Mammary epithelial cell (primary cell): ENCODE measurements at regions of chr16 and their contacts with region 1.

Region 1: GRCh38 chr16:47848421-47849109 is 307.2 kb downstream of the ABCC12 start:
- DNase-seq: peak; percentile 71
- H3K4me3 ChIP-seq: no peak overlapping the region
- H3K27ac ChIP-seq: peak overlapping the region; percentile 83
- H3K4me1 ChIP-seq: peaks cover 25% of the 10 kb centered on the region
- H3K27me3 ChIP-seq: no peaks in the 10 kb centered on the region
- CTCF ChIP-seq: no peak

Region 2: DNA sequence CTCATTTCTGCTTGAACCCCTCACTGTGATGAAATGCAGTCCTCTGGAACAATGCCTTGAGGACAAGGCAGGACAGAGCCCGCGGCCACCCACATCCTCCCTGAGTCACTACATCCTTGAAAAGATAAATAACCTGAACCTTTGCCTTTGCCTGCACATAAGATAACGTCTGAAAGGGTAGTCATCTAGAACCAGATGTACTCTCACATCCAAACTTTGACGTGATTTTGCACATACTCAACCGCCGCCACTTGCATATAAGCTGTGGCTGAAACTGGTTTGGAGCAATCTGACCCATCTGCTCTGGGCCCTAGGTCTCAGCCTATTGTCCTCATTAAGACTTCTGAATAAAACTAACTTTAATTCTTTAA is 135.4 kb before region 1 on chr16:
- CTCF ChIA-PET with region 1: no interaction called
- dilution Hi-C with region 1: no loop called
- in situ Hi-C with region 1: no loop called
- intact Hi-C with region 1: loop called (anchors 10 kb)
- DNase-seq: peak; percentile 93
- H3K4me3 ChIP-seq: no peak overlapping the region
- H3K27ac ChIP-seq: peak overlapping the region; percentile 78
- H3K4me1 ChIP-seq: peaks cover 28% of the 10 kb centered on the region
- H3K27me3 ChIP-seq: no peaks in the 10 kb centered on the region
- CTCF ChIP-seq: no peak

Region 3: DNA sequence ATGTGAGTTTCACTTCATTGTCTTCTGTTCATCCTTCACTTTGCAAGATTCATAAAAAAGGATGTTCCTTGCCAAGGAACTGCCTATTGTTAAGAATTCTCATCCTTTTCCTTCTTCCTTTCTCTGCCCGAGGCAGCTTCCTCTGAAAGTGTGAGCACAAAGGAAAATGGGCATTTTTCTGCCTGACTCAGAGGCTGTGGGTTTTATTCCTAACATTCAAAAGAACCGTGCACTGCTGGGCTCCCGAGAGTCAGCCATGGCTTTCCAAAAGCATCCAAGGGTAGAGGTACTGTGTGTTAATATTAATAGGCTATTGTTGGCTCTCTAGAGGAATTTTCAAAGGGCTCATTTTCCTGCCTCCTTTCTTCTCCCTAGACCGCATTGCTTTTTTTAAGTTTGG is 17.9 kb after region 1 on chr16:
- CTCF ChIA-PET with region 1: no interaction called
- dilution Hi-C with region 1: no loop called
- in situ Hi-C with region 1: no loop called
- intact Hi-C with region 1: loop called (anchors 1 kb)
- DNase-seq: peak; percentile 42
- H3K4me3 ChIP-seq: no peak overlapping the region
- H3K27ac ChIP-seq: no peak overlapping the region
- H3K4me1 ChIP-seq: peaks cover 7% of the 10 kb centered on the region
- H3K27me3 ChIP-seq: no peaks in the 10 kb centered on the region
- CTCF ChIP-seq: no peak

Region 4: GRCh38 chr16:47905771-47906170 is 57.2 kb after region 1 on chr16:
- CTCF ChIA-PET with region 1: no interaction called
- dilution Hi-C with region 1: no loop called
- in situ Hi-C with region 1: no loop called
- intact Hi-C with region 1: loop called (anchors 5 kb)
- DNase-seq: peak; percentile 90
- H3K4me3 ChIP-seq: no peak overlapping the region
- H3K27ac ChIP-seq: peak overlapping the region; percentile 17
- H3K4me1 ChIP-seq: peaks cover 23% of the 10 kb centered on the region
- H3K27me3 ChIP-seq: no peaks in the 10 kb centered on the region
- CTCF ChIP-seq: no peak

Region 5: DNA sequence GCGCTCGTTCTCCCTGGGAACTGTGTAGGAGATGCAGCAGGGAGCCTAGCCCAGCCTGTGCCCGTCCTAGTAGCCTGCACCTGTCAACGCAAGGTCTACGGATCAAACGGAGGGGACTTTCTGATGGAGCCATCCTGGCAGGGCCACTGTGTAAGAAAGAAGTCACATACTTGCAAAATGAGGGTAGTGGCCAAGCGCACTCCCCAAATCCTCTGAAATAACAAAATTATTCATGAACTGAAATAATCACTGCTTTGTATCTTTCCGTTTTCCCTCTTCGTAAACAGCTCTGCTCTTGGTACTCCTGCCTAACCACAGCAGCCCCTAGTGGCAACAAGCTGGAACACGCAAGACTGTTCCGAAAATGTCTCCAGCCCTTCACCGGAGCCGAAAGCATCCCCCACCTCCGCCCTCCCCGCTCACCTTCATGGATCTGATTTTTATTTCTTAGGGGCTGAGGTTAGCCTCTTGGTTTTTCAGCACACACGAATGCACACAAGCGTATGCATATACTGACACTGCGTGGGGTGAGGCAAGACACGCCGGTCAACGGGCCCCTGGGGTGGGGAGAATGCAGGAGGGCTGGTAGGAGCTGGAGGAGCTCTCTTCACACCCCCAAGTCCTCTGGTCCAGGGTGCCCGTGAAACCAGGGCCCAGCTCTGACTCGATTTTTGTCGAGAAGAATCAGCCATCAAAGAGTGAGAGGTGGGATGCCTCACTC is 206.5 kb after region 1 on chr16:
- CTCF ChIA-PET with region 1: no interaction called
- dilution Hi-C with region 1: no loop called
- in situ Hi-C with region 1: no loop called
- intact Hi-C with region 1: loop called (anchors 10 kb)
- DNase-seq: peak; percentile 41
- H3K4me3 ChIP-seq: no peak overlapping the region
- H3K27ac ChIP-seq: no peak overlapping the region
- H3K4me1 ChIP-seq: peaks cover 13% of the 10 kb centered on the region
- H3K27me3 ChIP-seq: no peaks in the 10 kb centered on the region
- CTCF ChIP-seq: peak; percentile 96 to 98